Transverse colon (tissue), 4 donors: ENCODE measurements at regions of chr1 and their contacts with region 1.

Region 1: DNA sequence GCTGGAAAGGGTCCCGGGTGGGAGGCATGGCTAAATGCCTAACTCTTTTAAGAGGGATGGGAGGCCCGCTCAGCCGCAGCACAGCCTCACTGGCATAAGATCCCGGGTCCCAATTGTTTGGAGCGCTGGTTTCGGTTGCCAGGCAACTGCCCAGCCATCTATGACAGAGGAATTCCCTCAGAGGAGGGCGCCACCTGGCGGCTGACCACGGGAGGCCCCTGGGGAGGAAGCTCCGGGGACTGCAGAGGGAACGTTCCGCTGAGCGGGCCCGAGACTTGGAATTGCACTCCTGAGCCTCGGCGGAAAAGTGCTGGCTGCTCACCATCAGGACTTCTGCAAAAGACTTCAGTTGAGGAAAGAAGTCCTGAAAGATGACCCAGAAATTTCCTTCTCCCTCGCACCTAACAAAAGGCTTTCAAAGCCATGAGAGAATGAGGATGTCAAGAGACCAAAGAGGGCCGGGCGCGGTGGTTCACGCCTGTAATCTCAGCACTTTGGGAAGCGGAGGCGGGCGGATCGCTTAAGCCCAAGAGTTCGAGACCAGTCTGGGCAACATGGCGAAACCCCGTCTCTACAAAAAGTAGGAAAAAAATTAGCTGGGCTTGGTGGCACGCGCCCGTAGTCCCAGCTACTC is 1.1 kb upstream of the ELAPOR1 start:
- DNase-seq: peak; percentile 94
- H3K4me3 ChIP-seq: peak overlapping the region in 2 of 4 donors; percentile 40 to 51
- H3K27ac ChIP-seq: peak overlapping the region in 3 of 4 donors; percentile 23 to 39 (median 27)
- H3K4me1 ChIP-seq: peaks cover 8 to 33% (median 20%) of the 10 kb centered on the region in 4 donors
- H3K27me3 ChIP-seq: peaks cover 23% of the 10 kb centered on the region
- CTCF ChIP-seq: peak; percentile 90 to 99 (median 99)
- EP300 ChIP-seq: no peak
- POLR2A ChIP-seq: no peak

Region 2: GRCh38 chr1:108963052-108963686 is 149.6 kb before region 1 on chr1 and contains the start of gene CLCC1:
- in situ Hi-C with region 1: no loop called
- intact Hi-C with region 1: loop called (anchors 10 kb)
- DNase-seq: peak; percentile 97
- H3K4me3 ChIP-seq: peak within 1 kb of the TSS; percentile 46 to 70 (median 60)
- H3K27ac ChIP-seq: peak within 1 kb of the TSS; percentile 95 to 98 (median 96)
- H3K4me1 ChIP-seq: peaks cover 4 to 24% (median 13%) of the 10 kb centered on the region in 4 donors
- H3K27me3 ChIP-seq: no peaks in the 10 kb centered on the region
- CTCF ChIP-seq: peak in 1 of 5 experiments; percentile 28
- EP300 ChIP-seq: peak; percentile 27
- POLR2A ChIP-seq: peak; percentile 92
- total RNA-seq, gene CLCC1: 13.0 to 21.9 (median 18.2) TPM

Region 3: DNA sequence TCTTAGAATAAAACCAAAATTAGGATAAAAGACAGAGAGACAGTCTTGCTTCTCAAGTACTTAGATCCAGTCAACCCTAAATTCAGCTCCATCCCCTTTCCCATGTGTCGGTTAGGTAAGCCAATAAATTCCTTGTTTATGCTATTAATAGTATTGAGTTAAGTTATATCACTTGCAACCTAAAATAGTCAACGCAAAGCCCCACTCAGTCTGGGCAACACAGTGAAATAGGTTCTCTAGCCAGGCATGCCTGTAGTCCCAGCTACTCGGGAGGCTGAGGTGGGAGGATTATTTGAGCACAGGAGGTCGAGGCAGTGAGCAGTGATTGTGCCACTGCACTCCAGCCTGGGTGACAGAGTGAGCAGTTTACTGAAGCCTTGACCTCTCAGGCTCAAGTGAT is 51.6 kb before region 1 on chr1:
- in situ Hi-C with region 1: no loop called
- intact Hi-C with region 1: no loop called
- DNase-seq: no peak
- H3K4me3 ChIP-seq: no peak overlapping the region
- H3K27ac ChIP-seq: no peak overlapping the region
- H3K4me1 ChIP-seq: peaks cover 0 to 6% (median 2%) of the 10 kb centered on the region in 4 donors
- H3K27me3 ChIP-seq: no peaks in the 10 kb centered on the region
- CTCF ChIP-seq: no peak
- EP300 ChIP-seq: no peak
- POLR2A ChIP-seq: no peak